Cardiac septum (tissue), 1 donor: ENCODE measurements at regions of chr3 and their contacts with region 1.

Region 1: GRCh38 chr3:15268033-15268631 is 62.1 kb downstream of the CAPN7 start:
- DNase-seq: peak; percentile 94

Region 2: GRCh38 chr3:15205934-15206661 is 62.0 kb before region 1 on chr3 and contains the start of gene CAPN7:
- intact Hi-C with region 1: no loop called
- DNase-seq: peak; percentile 98
- total RNA-seq, gene CAPN7: 29.2 TPM

Region 3: DNA sequence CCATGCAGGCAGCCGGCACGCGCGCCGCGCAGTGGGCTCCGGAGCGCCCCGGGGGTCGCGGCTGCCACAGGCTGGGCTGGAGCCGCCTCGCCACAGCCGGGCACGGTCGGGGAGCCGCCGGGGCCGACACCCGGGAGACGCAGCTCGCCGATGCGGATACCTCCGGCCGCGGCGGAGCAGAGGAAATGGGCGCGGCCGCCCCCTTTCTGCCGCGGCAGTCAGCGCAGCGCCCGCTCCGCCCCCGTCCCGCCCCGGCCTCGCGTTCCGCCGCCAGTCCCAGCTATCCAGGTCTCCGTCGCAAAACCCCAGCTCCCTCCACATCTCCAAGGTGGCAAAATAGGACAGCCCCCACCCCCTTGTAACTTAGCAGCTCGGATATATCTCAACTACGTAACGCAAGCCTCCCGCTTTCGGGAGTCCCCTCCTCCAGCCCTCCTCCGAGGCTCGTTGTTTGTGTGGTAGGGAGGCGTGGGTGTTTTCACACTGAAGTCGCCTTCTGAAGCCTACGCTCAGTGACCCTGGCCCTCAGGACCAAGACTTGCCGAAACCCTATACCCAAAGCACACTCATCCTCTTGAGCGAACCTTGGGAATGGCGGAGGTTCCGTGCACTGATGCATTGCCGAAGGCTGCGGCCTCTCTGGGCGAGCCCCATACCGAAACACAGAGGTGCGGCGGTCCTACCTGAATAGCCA is 64.4 kb after region 1 on chr3 and contains the start of gene SH3BP5:
- intact Hi-C with region 1: loop called (anchors 1 kb)
- DNase-seq: peak; percentile 90
- total RNA-seq, gene SH3BP5: 11.4 TPM